CD14-positive monocyte (primary cell): ENCODE measurements at regions of chr7 and their contacts with region 1.

Region 1: DNA sequence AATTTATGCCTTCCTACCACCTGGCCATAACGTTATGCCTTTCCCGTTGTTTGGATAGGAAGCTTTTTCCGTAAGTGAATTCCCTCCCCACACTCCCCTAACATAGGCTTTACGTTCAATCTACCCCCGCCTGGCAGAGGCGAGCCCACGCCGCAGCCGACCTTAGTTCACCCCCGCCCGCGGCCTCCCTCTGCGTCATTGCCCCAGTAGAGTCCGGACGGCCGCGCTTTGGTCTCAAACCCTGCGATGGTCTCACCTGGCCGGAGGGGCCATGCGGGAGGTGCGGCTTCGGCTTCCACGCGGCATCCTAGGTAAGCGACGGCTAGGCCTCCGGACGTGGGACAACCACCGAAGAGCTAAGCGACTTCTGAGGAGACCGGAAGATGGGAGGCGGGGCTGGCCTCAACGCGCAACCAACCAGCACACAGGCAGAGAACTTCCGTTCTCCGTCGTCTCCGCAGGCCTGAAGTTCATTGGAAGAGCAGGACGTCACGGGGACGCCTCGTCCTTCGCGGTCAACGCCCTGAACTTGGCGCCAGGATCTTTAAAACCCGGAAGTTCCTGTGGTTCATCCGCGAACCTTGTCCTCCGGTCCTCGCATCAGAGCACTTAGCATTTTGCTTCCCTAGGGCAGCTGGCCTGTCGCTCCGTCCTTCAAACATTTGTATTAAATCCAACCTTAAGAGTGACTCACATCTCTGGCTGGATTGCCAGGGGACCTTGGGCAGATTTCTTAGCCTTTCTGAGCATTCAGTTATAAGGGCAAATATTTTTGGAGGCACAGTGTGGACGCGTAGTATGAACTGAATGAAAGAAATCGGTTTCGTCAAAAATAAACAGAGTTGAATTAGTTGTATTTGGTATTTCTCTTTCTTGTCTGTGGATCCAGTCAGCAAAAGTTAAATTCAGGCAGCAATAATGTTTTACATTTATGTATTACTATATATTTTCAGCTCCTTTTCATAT is at the start of gene CHCHD2:
- DNase-seq: peak; percentile 98 to 99 (median 99)
- H3K4me3 ChIP-seq: peak within 1 kb of the TSS; percentile 62 to 97 (median 89)
- H3K4me3 Mint-ChIP-seq: peak within 1 kb of the TSS; percentile 95 to 99
- H3K27ac ChIP-seq: peak within 1 kb of the TSS; percentile 93 to 97
- H3K27ac Mint-ChIP-seq: peak within 1 kb of the TSS; percentile 96 to 99 (median 98)
- H3K4me1 ChIP-seq: peaks cover 22 to 24% of the 10 kb centered on the region in 2 donors
- H3K4me1 Mint-ChIP-seq: peaks cover 25% of the 10 kb centered on the region
- H3K27me3 ChIP-seq: no peaks in the 10 kb centered on the region
- H3K27me3 Mint-ChIP-seq: peaks cover 0 to 9% (median 2%) of the 10 kb centered on the region in 3 donors
- CTCF ChIP-seq: no peak
- polyA plus RNA-seq, gene CHCHD2: 241 to 500 (median 412) TPM

Region 2: GRCh38 chr7:54773472-54774399 is 1332.7 kb before region 1 on chr7:
- intact Hi-C with region 1: loop called in 1 of 2 experiments (anchors 10 kb)
- DNase-seq: peak; percentile 25 to 57 (median 50)
- H3K4me3 ChIP-seq: peak overlapping the region in 2 of 3 experiments; percentile 1 to 36
- H3K4me3 Mint-ChIP-seq: peak overlapping the region; percentile 68 to 82
- H3K27ac ChIP-seq: no peak overlapping the region
- H3K27ac Mint-ChIP-seq: peak overlapping the region in 1 of 7 donors; percentile 27
- H3K4me1 ChIP-seq: no peaks in the 10 kb centered on the region
- H3K4me1 Mint-ChIP-seq: peaks cover 11% of the 10 kb centered on the region
- H3K27me3 ChIP-seq: peaks cover 6 to 10% of the 10 kb centered on the region in 2 donors
- H3K27me3 Mint-ChIP-seq: peaks cover 12 to 18% (median 16%) of the 10 kb centered on the region in 3 donors
- CTCF ChIP-seq: peak; percentile 87

Region 3: GRCh38 chr7:55917771-55918170 is 188.6 kb before region 1 on chr7:
- intact Hi-C with region 1: no loop called
- DNase-seq: no peak
- H3K4me3 ChIP-seq: no peak overlapping the region
- H3K4me3 Mint-ChIP-seq: no peak overlapping the region
- H3K27ac ChIP-seq: no peak overlapping the region
- H3K27ac Mint-ChIP-seq: no peak overlapping the region
- H3K4me1 ChIP-seq: no peaks in the 10 kb centered on the region
- H3K4me1 Mint-ChIP-seq: no peaks in the 10 kb centered on the region
- H3K27me3 ChIP-seq: no peaks in the 10 kb centered on the region
- H3K27me3 Mint-ChIP-seq: no peaks in the 10 kb centered on the region
- CTCF ChIP-seq: no peak

Region 4: DNA sequence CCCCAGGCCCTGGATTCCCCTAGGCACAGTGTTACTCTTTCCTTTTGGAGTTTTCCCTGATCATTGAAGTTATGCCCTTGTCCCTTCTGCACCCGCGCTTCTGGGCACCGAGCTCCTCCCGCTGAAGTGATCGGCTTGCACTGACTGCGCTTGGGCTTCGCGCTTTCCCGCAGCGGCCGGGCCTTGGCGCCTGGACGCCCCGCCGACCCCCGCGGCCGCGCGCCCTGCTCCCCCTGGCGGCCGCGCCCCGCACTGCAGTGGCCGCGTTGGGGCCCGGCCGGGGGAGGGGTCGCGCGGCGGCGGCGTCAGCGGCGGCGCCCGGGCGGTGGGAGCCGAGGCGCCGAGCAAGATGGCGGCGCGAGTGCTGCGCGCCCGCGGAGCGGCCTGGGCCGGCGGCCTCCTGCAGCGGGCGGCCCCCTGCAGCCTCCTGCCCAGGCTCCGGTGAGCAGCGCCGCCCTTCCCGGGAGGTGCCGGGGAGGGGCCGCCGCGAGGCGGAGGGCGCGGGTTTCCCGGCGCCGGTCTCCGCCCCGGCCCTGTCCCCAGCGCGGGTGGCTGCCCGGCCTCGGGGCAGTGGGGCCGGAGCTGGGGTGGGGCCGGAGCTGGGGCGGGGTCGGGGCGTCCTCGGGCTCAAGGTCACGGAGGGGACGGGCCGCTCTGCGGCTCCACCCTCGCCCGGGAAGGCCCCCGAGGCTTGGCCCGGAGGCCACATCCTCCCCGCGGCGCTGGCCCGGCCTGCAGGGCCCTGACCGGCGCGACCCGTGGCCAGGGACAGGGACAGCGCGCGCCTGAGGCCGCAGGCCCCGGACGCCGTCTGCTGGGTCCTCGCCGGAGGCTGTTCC is 141.9 kb before region 1 on chr7 and contains the start of gene NIPSNAP2:
- intact Hi-C with region 1: loop called in 1 of 2 experiments (anchors 1 kb)
- DNase-seq: peak; percentile 58 to 78 (median 77)
- H3K4me3 ChIP-seq: peak within 1 kb of the TSS; percentile 64 to 79 (median 66)
- H3K4me3 Mint-ChIP-seq: peak within 1 kb of the TSS; percentile 88 to 94
- H3K27ac ChIP-seq: peak within 1 kb of the TSS; percentile 88 to 92
- H3K27ac Mint-ChIP-seq: peak within 1 kb of the TSS; percentile 90 to 97 (median 96)
- H3K4me1 ChIP-seq: peaks cover 18% of the 10 kb centered on the region in 2 donors
- H3K4me1 Mint-ChIP-seq: peaks cover 23% of the 10 kb centered on the region
- H3K27me3 ChIP-seq: peaks cover 0 to 5% of the 10 kb centered on the region in 2 donors
- H3K27me3 Mint-ChIP-seq: peaks cover 0 to 9% (median 7%) of the 10 kb centered on the region in 3 donors
- CTCF ChIP-seq: peak; percentile 56
- polyA plus RNA-seq, gene NIPSNAP2: 43.2 to 97.5 (median 88.0) TPM

Region 5: DNA sequence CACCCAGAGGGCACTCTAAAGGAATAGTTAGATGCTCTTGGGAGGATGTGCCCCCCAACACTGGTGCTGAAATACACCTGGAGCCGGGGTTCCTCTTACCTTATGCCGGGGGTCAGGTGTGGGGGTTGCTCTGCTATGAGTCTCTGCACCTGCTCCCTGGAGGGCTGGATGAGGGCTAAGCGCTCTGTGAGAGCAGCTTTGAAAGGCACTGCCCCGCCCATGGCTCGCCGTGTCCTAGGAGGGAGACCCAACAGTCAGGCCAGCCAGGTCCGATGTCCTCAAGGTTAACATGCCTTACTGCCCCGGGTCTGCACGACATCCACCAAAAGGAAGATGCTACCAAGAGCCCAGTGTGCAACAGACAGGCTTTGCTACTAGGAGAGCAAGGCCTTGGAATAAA is 86.9 kb before region 1 on chr7:
- intact Hi-C with region 1: no loop called
- DNase-seq: no peak
- H3K4me3 ChIP-seq: no peak overlapping the region
- H3K4me3 Mint-ChIP-seq: no peak overlapping the region
- H3K27ac ChIP-seq: no peak overlapping the region
- H3K27ac Mint-ChIP-seq: no peak overlapping the region
- H3K4me1 ChIP-seq: no peaks in the 10 kb centered on the region
- H3K4me1 Mint-ChIP-seq: no peaks in the 10 kb centered on the region
- H3K27me3 ChIP-seq: no peaks in the 10 kb centered on the region
- H3K27me3 Mint-ChIP-seq: peaks cover 0 to 2% (median 0%) of the 10 kb centered on the region in 3 donors
- CTCF ChIP-seq: no peak

Region 6: DNA sequence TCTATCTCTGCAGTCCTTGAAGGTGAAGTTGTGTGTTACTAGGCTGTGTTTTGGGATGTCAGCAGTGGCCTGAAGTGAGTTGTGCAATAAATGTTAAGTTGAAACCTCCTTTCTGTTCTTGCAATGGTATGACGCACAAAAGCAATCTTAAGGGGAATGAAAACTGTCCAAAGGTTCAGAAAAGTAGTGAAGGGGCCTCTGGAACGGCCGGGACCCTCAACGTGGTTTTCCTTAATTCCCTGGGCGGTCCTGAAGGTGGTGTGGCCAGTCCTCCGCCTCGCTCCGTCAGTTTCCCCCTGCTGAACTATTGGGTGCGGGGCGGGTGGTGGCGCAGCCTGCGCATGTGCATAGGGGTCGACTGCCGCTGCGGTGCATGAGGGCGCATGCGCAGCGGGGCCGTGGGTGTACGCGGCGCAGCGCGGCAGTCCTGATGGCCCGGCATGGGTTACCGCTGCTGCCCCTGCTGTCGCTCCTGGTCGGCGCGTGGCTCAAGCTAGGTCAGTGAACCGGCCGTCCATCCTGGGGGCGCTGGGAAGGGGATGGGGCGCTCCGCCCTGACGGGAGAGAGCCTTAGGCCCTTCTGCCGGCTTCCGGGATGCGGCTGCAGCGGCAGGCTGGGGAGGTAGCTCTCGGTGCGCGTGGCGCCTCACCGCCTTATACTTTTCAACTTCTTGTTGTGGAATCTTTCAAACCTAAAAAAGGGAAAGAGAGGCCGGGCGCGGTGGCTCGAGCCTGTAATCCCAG is 42.3 kb before region 1 on chr7 and contains the start of gene SUMF2:
- intact Hi-C with region 1: loop called in 1 of 2 experiments (anchors 5 kb)
- DNase-seq: peak; percentile 91 to 92 (median 92)
- H3K4me3 ChIP-seq: peak within 1 kb of the TSS; percentile 82 to 95 (median 87)
- H3K4me3 Mint-ChIP-seq: peak within 1 kb of the TSS; percentile 94
- H3K27ac ChIP-seq: peak within 1 kb of the TSS; percentile 94 to 95
- H3K27ac Mint-ChIP-seq: peak within 1 kb of the TSS; percentile 96 to 98 (median 97)
- H3K4me1 ChIP-seq: peaks cover 12 to 24% of the 10 kb centered on the region in 2 donors
- H3K4me1 Mint-ChIP-seq: peaks cover 19% of the 10 kb centered on the region
- H3K27me3 ChIP-seq: no peaks in the 10 kb centered on the region
- H3K27me3 Mint-ChIP-seq: peaks cover 0 to 1% (median 0%) of the 10 kb centered on the region in 3 donors
- CTCF ChIP-seq: no peak
- polyA plus RNA-seq, gene SUMF2: 69.5 to 88.2 (median 75.0) TPM

Region 7: GRCh38 chr7:56074371-56074791 is 32.0 kb before region 1 on chr7:
- intact Hi-C with region 1: no loop called
- DNase-seq: peak; percentile 66 to 73 (median 73)
- H3K4me3 ChIP-seq: no peak overlapping the region
- H3K4me3 Mint-ChIP-seq: no peak overlapping the region
- H3K27ac ChIP-seq: peak overlapping the region in 1 of 2 donors; percentile 36
- H3K27ac Mint-ChIP-seq: peak overlapping the region in 3 of 7 donors; percentile 17 to 78 (median 66)
- H3K4me1 ChIP-seq: no peaks in the 10 kb centered on the region
- H3K4me1 Mint-ChIP-seq: peaks cover 2% of the 10 kb centered on the region
- H3K27me3 ChIP-seq: no peaks in the 10 kb centered on the region
- H3K27me3 Mint-ChIP-seq: no peaks in the 10 kb centered on the region
- CTCF ChIP-seq: peak; percentile 89

Region 8: DNA sequence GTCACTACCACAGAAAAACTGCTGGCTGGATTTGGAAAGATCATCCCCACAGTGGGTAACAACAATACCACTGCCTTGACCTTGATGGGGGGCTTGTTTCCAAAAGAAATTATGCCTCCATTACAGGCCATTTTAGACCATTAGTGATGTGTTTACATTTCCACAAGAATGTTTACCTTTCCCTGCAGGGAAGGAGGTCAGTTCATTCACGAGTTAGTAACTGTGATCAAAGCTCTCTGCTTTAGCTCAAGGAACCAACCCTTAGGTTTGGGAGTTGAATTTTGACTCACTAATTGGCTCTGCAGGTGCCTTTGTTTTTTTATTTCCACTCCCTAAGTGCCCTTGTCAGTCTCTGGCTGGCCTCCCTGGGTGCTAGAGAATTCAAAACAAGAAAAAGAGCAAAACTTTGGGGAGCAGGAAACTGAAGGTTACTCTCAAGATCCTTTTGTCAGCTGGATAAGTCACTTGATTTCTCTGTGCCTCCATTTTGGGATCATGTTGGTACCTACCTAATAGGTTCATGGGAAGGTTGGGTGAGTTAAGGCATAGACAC is 50.9 kb after region 1 on chr7:
- intact Hi-C with region 1: no loop called
- DNase-seq: no peak
- H3K4me3 ChIP-seq: no peak overlapping the region
- H3K4me3 Mint-ChIP-seq: no peak overlapping the region
- H3K27ac ChIP-seq: no peak overlapping the region
- H3K27ac Mint-ChIP-seq: no peak overlapping the region
- H3K4me1 ChIP-seq: no peaks in the 10 kb centered on the region
- H3K4me1 Mint-ChIP-seq: no peaks in the 10 kb centered on the region
- H3K27me3 ChIP-seq: no peaks in the 10 kb centered on the region
- H3K27me3 Mint-ChIP-seq: no peaks in the 10 kb centered on the region
- CTCF ChIP-seq: no peak